ENCODE measurements at regions of chr15 and their contacts with region 1.

Region 1: GRCh38 chr15:34927726-34928125 is 41.8 kb downstream of the AQR start:
- DNase-seq: no peak
- ATAC-seq: no peak
- H3K4me3 ChIP-seq: no peak overlapping the region
- H3K27ac ChIP-seq: no peak overlapping the region
- H3K4me1 ChIP-seq: no peaks in the 10 kb centered on the region
- H3K27me3 ChIP-seq: no peaks in the 10 kb centered on the region
- CTCF ChIP-seq: no peak

Region 2: GRCh38 chr15:34708422-34708821 is 219.3 kb before region 1 on chr15:
- intact Hi-C with region 1: loop called in 1 of 2 experiments (anchors 10 kb)
- DNase-seq: peak in 2 of 4 donors; percentile 30 to 64
- ATAC-seq: peak; percentile 76
- H3K4me3 ChIP-seq: no peak overlapping the region
- H3K27ac ChIP-seq: no peak overlapping the region
- H3K4me1 ChIP-seq: no peaks in the 10 kb centered on the region
- H3K27me3 ChIP-seq: peaks cover 0 to 24% of the 10 kb centered on the region in 2 donors
- CTCF ChIP-seq: peak in 1 of 2 donors; percentile 55

Measured in left lung (tissue), 14 donors.